ENCODE measurements at regions of chr9 and their contacts with region 1.

Region 1: GRCh38 chr9:126500684-126501382 is 112.9 kb upstream of the LMX1B start:
- DNase-seq: peak; percentile 72 to 79
- H3K4me3 ChIP-seq: no peak overlapping the region
- H3K27ac ChIP-seq: no peak overlapping the region
- H3K4me1 ChIP-seq: no peaks in the 10 kb centered on the region
- H3K27me3 ChIP-seq: no peaks in the 10 kb centered on the region
- CTCF ChIP-seq: peak; percentile 88 to 95 (median 90)
- POLR2A ChIP-seq: no peak

Region 2: DNA sequence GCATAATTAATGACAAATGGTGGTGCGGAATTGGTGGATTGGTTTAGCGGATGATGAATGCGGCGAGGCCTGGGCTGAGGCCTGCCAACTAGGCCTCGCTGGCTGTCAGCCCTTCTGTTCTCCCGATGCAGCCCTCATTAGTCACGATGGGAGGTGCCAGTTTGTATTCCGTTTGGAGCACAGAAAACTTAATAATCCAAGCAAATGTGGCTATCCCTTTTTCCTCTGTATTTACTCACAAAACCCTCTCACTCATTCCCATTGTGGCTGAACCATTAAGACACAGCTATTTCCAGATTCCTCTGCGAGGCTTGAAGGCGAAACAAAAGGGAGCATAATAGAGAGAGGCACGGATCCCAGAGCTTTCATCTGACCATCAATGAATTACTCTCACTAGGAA is 59.9 kb before region 1 on chr9:
- intact Hi-C with region 1: no loop called
- DNase-seq: no peak
- H3K4me3 ChIP-seq: no peak overlapping the region
- H3K27ac ChIP-seq: no peak overlapping the region
- H3K4me1 ChIP-seq: no peaks in the 10 kb centered on the region
- H3K27me3 ChIP-seq: no peaks in the 10 kb centered on the region
- CTCF ChIP-seq: no peak
- POLR2A ChIP-seq: no peak

Region 3: GRCh38 chr9:126558051-126558665 is 57.3 kb after region 1 on chr9:
- intact Hi-C with region 1: loop called (anchors 5 kb)
- DNase-seq: peak; percentile 27 to 50
- H3K4me3 ChIP-seq: no peak overlapping the region
- H3K27ac ChIP-seq: no peak overlapping the region
- H3K4me1 ChIP-seq: no peaks in the 10 kb centered on the region
- H3K27me3 ChIP-seq: peaks cover 0 to 4% of the 10 kb centered on the region in 2 donors
- CTCF ChIP-seq: peak; percentile 71 to 86 (median 84)
- POLR2A ChIP-seq: no peak